ENCODE measurements at regions of chr15 and their contacts with region 1.

Region 1: GRCh38 chr15:98085003-98085639 is 124.6 kb downstream of the ARRDC4 start:
- DNase-seq: peak; percentile 73
- H3K4me3 ChIP-seq: no peak overlapping the region
- H3K27ac ChIP-seq: no peak overlapping the region
- H3K4me1 ChIP-seq: no peaks in the 10 kb centered on the region
- H3K27me3 ChIP-seq: no peaks in the 10 kb centered on the region
- CTCF ChIP-seq: peak; percentile 74

Region 2: GRCh38 chr15:97425596-97425995 is 659.5 kb before region 1 on chr15:
- CTCF ChIA-PET with region 1: no interaction called
- POLR2A ChIA-PET with region 1: no interaction called
- intact Hi-C with region 1: no loop called
- DNase-seq: peak; percentile 60
- H3K4me3 ChIP-seq: no peak overlapping the region
- H3K27ac ChIP-seq: no peak overlapping the region
- H3K4me1 ChIP-seq: peaks cover 9% of the 10 kb centered on the region
- H3K27me3 ChIP-seq: no peaks in the 10 kb centered on the region
- CTCF ChIP-seq: no peak

Region 3: DNA sequence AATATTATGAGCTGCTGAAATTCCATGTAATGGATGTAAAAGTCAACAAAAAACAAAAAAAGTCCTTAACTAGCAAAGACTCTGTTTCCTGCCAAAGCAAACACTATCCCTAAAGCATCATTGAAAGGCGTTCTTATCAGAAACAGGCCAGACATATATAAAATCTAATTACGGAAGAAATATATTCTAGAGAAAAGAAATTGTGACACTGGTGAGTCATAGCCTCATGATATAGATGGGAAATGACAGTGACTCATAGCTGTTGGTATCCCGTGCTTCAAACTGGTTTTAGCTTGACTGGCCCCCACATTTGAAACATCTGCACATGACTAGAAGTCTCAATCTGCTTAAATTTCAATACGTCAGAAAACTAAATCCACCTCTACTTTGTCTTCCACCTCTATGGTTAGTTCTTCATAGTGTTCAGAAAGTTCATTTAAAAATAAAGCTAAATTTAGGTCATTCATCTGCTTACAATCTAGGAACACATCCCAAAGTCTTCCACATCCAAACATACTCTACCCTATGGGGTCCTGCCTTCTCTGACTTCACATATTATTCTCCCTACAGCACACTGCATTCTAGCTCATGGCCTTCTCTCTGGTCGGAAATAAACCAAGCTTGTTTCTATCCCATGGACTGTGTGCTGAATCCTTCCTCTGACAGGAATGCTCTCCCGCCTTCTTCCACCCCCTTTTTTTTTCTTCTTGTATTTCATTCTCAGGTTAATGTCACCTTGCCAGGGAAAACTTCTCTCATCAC is 580.9 kb before region 1 on chr15:
- CTCF ChIA-PET with region 1: no interaction called
- POLR2A ChIA-PET with region 1: no interaction called
- intact Hi-C with region 1: no loop called
- DNase-seq: peak; percentile 80
- H3K4me3 ChIP-seq: no peak overlapping the region
- H3K27ac ChIP-seq: no peak overlapping the region
- H3K4me1 ChIP-seq: no peaks in the 10 kb centered on the region
- H3K27me3 ChIP-seq: no peaks in the 10 kb centered on the region
- CTCF ChIP-seq: no peak

Region 4: GRCh38 chr15:97903971-97904572 is 181.0 kb before region 1 on chr15:
- CTCF ChIA-PET with region 1: interaction called, 3 read pairs
- POLR2A ChIA-PET with region 1: no interaction called
- intact Hi-C with region 1: loop called (anchors 1 kb)
- DNase-seq: peak; percentile 83
- H3K4me3 ChIP-seq: no peak overlapping the region
- H3K27ac ChIP-seq: no peak overlapping the region
- H3K4me1 ChIP-seq: peaks cover 2% of the 10 kb centered on the region
- H3K27me3 ChIP-seq: peaks cover 8% of the 10 kb centered on the region
- CTCF ChIP-seq: peak; percentile 88

Region 5: GRCh38 chr15:97909291-97909891 is 175.7 kb before region 1 on chr15:
- CTCF ChIA-PET with region 1: no interaction called
- POLR2A ChIA-PET with region 1: no interaction called
- intact Hi-C with region 1: loop called (anchors 1 kb)
- DNase-seq: peak; percentile 71
- H3K4me3 ChIP-seq: no peak overlapping the region
- H3K27ac ChIP-seq: no peak overlapping the region
- H3K4me1 ChIP-seq: no peaks in the 10 kb centered on the region
- H3K27me3 ChIP-seq: peaks cover 28% of the 10 kb centered on the region
- CTCF ChIP-seq: peak; percentile 90

Region 6: GRCh38 chr15:98292442-98293240 is 207.5 kb after region 1 on chr15:
- CTCF ChIA-PET with region 1: no interaction called
- POLR2A ChIA-PET with region 1: no interaction called
- intact Hi-C with region 1: loop called (anchors 10 kb)
- DNase-seq: peak; percentile 44
- H3K4me3 ChIP-seq: peak overlapping the region; percentile 33
- H3K27ac ChIP-seq: no peak overlapping the region
- H3K4me1 ChIP-seq: peaks cover 13% of the 10 kb centered on the region
- H3K27me3 ChIP-seq: peaks cover 30% of the 10 kb centered on the region
- CTCF ChIP-seq: peak; percentile 88

Region 7: DNA sequence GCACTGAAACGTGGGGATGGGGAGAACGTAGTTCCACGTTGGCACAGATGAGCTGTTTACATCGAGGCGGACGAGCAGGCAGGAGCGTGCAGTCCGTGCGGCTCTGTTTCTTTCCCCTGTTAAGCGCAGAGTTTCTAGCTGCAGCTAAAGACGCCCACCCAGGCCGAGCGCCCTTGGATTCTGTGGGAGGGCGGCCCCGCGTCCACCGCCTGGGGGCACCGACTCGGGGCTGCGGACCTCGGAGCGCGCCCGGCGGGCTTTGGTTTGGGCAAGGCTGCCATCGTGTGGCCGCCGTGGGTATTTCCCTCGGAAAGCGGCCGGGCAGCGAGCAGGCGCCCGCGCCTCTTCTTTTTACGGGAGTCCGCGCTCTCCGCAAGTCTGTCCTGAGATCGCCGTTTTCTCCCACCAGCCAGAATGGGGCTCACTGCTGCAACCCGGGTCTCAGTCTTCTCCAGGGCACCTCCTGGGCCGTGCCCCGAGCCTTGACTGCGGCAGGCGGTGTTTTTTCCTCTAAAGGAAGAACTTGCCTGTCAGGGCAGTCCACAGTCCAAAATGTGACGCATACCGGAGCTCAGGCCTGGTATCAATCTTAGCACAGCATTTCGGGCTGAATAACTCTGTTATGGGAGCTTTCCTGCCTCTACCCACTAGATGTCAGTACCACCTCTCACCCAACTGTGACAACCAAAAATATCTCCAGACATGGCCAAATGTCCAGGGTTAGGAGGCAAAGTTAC is 343.3 kb after region 1 on chr15:
- CTCF ChIA-PET with region 1: interaction called, 3 read pairs
- POLR2A ChIA-PET with region 1: no interaction called
- intact Hi-C with region 1: loop called (anchors 10 kb)
- DNase-seq: peak; percentile 70
- H3K4me3 ChIP-seq: peak overlapping the region; percentile 40
- H3K27ac ChIP-seq: no peak overlapping the region
- H3K4me1 ChIP-seq: no peaks in the 10 kb centered on the region
- H3K27me3 ChIP-seq: peaks cover 22% of the 10 kb centered on the region
- CTCF ChIP-seq: peak; percentile 80